Right cardiac atrium (tissue), 5 donors: ENCODE measurements at regions of chr3 and their contacts with region 1.

Region 1: GRCh38 chr3:98329392-98330124 is 24.1 kb upstream of the OR5K4 start:
- DNase-seq: peak; percentile 29 to 52 (median 42)
- ATAC-seq: peak; percentile 16 to 63
- H3K4me3 ChIP-seq: no peak overlapping the region
- H3K27ac ChIP-seq: no peak overlapping the region
- H3K4me1 ChIP-seq: no peaks in the 10 kb centered on the region
- H3K27me3 ChIP-seq: no peaks in the 10 kb centered on the region

Region 2: DNA sequence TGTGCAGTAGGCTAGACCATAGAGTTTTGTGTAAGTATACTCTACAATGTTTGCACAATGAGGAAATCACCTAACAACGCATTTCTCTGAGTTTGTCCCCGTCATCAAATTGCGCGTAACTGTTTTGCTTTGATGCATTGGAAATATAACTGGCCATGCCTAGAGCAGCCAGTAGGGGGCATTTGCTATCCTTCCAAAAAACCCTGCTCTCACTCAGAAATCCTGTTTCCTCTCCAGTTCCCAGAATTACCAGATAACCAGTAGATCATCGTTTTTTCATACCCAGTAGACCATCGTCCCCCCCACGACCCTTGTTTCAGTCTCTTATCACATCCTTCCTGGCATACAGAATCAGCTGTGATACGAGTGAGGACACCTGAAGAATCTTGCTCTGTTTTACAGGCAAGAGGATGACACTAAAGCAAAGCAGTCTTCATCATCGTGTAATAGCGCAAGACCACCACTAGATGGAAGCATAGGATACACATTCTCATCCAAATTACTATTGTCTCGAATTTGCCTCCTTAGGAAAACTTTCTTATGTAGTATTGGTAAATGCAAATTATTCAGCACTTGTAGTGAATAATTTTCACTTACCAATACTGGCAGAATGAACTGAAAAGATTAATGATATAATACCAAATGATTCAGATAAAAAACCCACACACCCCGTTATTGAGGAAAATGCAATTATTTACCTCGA is 290.1 kb before region 1 on chr3:
- intact Hi-C with region 1: loop called (anchors 2 to 5 kb)
- DNase-seq: peak; percentile 16 to 60 (median 47)
- ATAC-seq: peak; percentile 82 to 92
- H3K4me3 ChIP-seq: peak overlapping the region; percentile 32
- H3K27ac ChIP-seq: no peak overlapping the region
- H3K4me1 ChIP-seq: no peaks in the 10 kb centered on the region
- H3K27me3 ChIP-seq: no peaks in the 10 kb centered on the region

Region 3: DNA sequence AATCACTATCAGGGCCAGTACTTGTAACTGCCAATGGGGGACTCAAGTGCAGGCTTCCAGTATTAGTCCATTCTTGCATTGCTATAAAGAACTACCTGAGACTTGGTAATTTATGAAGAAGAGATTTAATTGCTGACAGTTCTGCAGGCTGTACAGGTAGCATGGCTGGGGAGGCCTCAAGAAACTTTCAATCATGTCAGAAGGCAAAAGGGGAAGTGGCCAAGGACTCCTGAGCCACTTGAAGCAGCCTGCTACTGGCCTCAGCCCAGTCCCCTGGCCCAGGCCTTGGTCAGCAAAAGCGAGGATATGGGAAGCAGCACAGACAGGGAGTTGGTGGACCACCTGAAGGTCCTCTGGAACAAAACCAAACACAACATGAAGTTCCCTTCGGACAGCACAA is 104.2 kb after region 1 on chr3:
- intact Hi-C with region 1: no loop called
- DNase-seq: no peak
- ATAC-seq: no peak
- H3K4me3 ChIP-seq: no peak overlapping the region
- H3K27ac ChIP-seq: no peak overlapping the region
- H3K4me1 ChIP-seq: no peaks in the 10 kb centered on the region
- H3K27me3 ChIP-seq: no peaks in the 10 kb centered on the region